RWPE1 (cell line): ENCODE measurements at regions of chr20 and their contacts with region 1.

Region 1: GRCh38 chr20:38343311-38344106 is 2.8 kb upstream of the LBP start:
- DNase-seq: no peak
- H3K27ac ChIP-seq: no peak overlapping the region
- CTCF ChIP-seq: no peak

Region 2: GRCh38 chr20:38373898-38374297 is 30.4 kb after region 1 on chr20:
- CTCF ChIA-PET with region 1: interaction called, 11 read pairs
- POLR2A ChIA-PET with region 1: no interaction called
- DNase-seq: no peak
- H3K27ac ChIP-seq: no peak overlapping the region
- CTCF ChIP-seq: no peak

Region 3: GRCh38 chr20:38406476-38406875 is 63.0 kb after region 1 on chr20:
- CTCF ChIA-PET with region 1: interaction called, 73 read pairs
- POLR2A ChIA-PET with region 1: no interaction called
- DNase-seq: no peak
- H3K27ac ChIP-seq: no peak overlapping the region
- CTCF ChIP-seq: no peak